Panc1 (cell line): ENCODE measurements at regions of chr1 and their contacts with region 1.

Region 1: GRCh38 chr1:234772345-234773147 is 162.6 kb upstream of the IRF2BP2 start:
- DNase-seq: peak; percentile 95
- ATAC-seq: peak; percentile 97
- H3K4me3 ChIP-seq: no peak overlapping the region; a peak in 2 of 4 replicates
- H3K27ac ChIP-seq: peak overlapping the region; percentile 99
- H3K4me1 ChIP-seq: peaks cover 45% of the 10 kb centered on the region
- H3K27me3 ChIP-seq: no peaks in the 10 kb centered on the region
- CTCF ChIP-seq: no peak

Region 2: DNA sequence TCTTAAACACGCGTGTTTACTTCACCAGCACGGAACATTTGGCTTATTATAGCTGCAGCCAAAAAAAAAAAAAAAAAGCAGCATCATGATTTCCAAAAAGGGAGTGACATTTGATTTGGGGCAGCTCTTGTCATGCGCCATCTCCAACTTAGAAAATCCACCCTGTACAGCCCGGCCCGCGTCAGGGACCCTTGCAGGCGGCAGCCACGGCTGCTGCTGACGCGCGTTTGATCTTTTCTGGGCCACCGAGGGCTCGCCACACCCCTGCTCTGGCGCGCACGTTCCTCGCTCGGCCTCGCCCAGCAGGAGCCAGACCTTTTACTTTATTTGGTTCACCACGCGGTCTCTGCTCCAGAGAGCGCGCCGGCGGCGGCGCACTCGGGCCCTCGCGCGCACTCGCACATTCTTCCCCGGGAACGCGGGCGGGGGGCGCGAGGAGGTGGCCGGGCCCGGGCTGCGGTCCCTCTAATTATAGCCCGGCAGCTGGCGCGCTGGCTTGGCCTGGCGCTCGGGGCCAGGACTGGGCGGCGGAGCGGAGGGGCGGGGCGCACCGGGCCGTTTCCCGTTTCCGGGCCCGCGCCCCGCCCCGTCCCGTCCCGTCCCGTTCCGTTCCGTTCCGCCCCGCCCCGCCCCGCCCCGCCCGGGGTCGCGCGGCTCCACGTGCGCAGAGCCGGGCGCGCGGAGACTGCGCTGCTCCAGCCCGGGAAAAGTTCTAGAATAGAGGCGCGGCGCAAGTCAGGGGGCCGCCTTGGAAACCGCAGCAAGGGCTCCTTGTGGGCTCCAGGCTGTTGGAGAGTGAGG is 172.7 kb before region 1 on chr1:
- CTCF ChIA-PET with region 1: no interaction called
- POLR2A ChIA-PET with region 1: interaction called, 10 read pairs
- in situ Hi-C with region 1: no loop called
- intact Hi-C with region 1: no loop called
- DNase-seq: no peak
- ATAC-seq: peak; percentile 90
- H3K4me3 ChIP-seq: peak overlapping the region; percentile 51 to 57
- H3K27ac ChIP-seq: peak overlapping the region; percentile 99
- H3K4me1 ChIP-seq: peaks cover 47% of the 10 kb centered on the region
- H3K27me3 ChIP-seq: no peaks in the 10 kb centered on the region
- CTCF ChIP-seq: 0 out of 2 replicates have a peak, but pooled peaks have one; percentile 9

Region 3: GRCh38 chr1:234730770-234731568 is 41.6 kb before region 1 on chr1:
- CTCF ChIA-PET with region 1: no interaction called
- POLR2A ChIA-PET with region 1: no interaction called
- in situ Hi-C with region 1: no loop called
- intact Hi-C with region 1: no loop called
- DNase-seq: no peak
- ATAC-seq: peak; percentile 12
- H3K4me3 ChIP-seq: no peak overlapping the region
- H3K27ac ChIP-seq: peak overlapping the region; percentile 95
- H3K4me1 ChIP-seq: peaks cover 39% of the 10 kb centered on the region
- H3K27me3 ChIP-seq: no peaks in the 10 kb centered on the region
- CTCF ChIP-seq: no peak

Region 4: GRCh38 chr1:234836045-234836681 is 63.6 kb after region 1 on chr1:
- CTCF ChIA-PET with region 1: no interaction called
- POLR2A ChIA-PET with region 1: no interaction called
- in situ Hi-C with region 1: no loop called
- intact Hi-C with region 1: no loop called
- DNase-seq: no peak
- ATAC-seq: no peak
- H3K4me3 ChIP-seq: no peak overlapping the region
- H3K27ac ChIP-seq: peak overlapping the region; percentile 73; the same call in 1 of the 2 replicates
- H3K4me1 ChIP-seq: peaks cover 16% of the 10 kb centered on the region
- H3K27me3 ChIP-seq: no peaks in the 10 kb centered on the region
- CTCF ChIP-seq: no peak

Region 5: GRCh38 chr1:235067263-235068172 is 295.0 kb after region 1 on chr1:
- CTCF ChIA-PET with region 1: no interaction called
- POLR2A ChIA-PET with region 1: interaction called, 16 read pairs
- in situ Hi-C with region 1: no loop called
- intact Hi-C with region 1: no loop called
- DNase-seq: peak; percentile 97
- ATAC-seq: peak; percentile 79
- H3K4me3 ChIP-seq: peak overlapping the region in 1 of 2 experiments; percentile 31; a peak in 2 of 4 replicates
- H3K27ac ChIP-seq: peak overlapping the region; percentile 100
- H3K4me1 ChIP-seq: peaks cover 63% of the 10 kb centered on the region
- H3K27me3 ChIP-seq: no peaks in the 10 kb centered on the region
- CTCF ChIP-seq: no peak